Activated CD8-positive, alpha-beta T cell treated with anti-CD3 and anti-CD28 coated beads, Interleukin-2, amount 10 ng/mL, durations not matched to agents 7 days and 5 days (primary cell): ENCODE measurements at regions of chr19 and their contacts with region 1.

Region 1: DNA sequence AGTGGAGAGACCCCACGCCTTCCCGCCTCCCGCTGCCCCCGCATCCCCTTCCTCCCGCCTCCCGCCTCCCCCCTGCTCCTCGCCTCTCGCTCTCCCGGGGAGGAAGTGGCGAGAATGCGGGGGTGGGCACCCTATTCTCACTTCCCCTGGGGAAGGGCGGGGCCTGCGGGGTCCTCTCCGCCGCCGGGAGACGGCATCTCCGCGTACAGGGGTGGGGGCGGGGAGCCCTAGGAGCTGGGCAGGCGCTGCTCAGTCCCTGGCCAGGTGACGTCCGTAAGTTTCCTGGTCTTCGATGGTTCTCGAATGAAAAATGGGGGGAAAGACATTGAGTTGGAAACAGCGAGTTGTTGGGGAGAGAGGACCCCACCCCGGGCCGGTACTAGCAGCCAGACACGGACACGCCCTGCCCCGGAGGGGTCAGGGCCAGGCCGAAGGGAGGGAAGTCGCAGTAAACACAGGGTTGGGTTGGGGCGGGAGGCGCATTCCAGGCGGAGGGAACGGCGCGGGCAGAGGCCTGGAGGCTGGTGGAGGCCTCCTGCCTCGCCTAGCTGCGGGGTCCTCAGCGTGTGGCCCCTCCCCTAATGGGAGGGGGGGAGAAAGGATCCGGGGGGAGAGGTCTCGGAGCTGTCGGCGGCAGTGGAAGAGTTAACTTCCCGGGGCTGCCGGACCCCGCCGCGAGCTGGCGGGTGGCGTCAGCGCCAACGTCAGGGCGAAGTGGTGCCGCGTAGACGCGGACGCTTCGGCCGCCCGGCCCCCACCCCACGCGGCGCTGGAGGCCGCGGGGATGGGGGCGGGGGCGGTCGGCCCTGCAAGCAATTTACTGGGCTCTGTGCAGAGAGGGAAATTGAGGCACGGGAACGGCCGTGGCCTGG is 10.4 kb upstream of the JUND start:
- DNase-seq: peak; percentile 93
- ATAC-seq: peak; percentile 41
- H3K4me3 Mint-ChIP-seq: peak overlapping the region; percentile 89
- H3K27ac Mint-ChIP-seq: peak overlapping the region; percentile 93
- H3K4me1 Mint-ChIP-seq: peaks cover 72% of the 10 kb centered on the region
- H3K27me3 Mint-ChIP-seq: no peaks in the 10 kb centered on the region

Region 2: DNA sequence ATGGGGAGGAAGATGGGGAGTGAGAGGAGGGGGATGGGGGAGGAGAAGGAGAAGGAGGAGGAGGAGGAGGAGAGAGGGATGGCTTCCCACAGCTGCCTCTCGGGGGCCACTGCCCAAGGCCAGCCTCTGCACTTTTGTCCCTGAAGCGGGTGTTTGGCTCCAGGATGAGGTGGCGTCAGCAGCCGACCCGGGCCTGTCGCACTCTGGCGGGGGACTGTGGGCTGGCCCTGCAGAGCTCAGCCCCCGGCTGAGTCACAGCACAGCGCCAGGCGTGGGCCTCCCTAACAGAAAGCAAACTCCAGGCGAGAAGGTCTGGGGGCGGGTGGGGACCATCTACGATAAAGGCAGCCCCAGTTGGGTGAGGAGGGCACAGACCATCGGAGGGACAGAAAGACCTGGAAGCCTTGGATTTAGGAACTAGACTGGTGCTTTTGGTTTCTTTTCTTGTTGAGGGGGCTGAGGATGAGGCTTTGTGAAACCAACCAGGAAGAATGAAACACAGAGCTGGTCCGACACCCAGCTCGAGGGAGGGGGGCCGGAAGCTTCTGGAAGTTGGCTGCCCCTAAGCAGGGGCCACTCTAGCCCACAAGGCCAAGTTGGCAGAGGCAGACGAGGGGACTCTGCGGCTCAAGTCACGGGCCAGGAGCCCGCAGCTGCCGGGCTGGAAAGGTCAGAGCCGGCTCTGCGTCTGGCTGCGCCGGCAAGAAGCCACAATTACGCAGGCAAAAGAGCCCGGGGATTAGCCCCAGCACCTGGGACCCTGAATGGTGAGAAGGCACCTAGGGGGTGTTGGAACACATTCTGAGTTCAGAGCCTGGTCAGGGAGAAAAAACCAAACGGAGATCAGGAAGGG is 12.9 kb after region 1 on chr19:
- CTCF ChIA-PET with region 1: interaction called, 52 read pairs
- POLR2A ChIA-PET with region 1: interaction called, 157 read pairs
- DNase-seq: peak; percentile 87
- ATAC-seq: peak; percentile 74
- H3K4me3 Mint-ChIP-seq: peak overlapping the region; percentile 99
- H3K27ac Mint-ChIP-seq: peak overlapping the region; percentile 94
- H3K4me1 Mint-ChIP-seq: peaks cover 49% of the 10 kb centered on the region
- H3K27me3 Mint-ChIP-seq: no peaks in the 10 kb centered on the region

Region 3: GRCh38 chr19:18322759-18323460 is 31.1 kb after region 1 on chr19 and contains the start of gene LSM4:
- CTCF ChIA-PET with region 1: interaction called, 32 read pairs
- POLR2A ChIA-PET with region 1: interaction called, 64 read pairs
- DNase-seq: peak; percentile 100
- ATAC-seq: peak; percentile 95
- H3K4me3 Mint-ChIP-seq: peak within 1 kb of the TSS; percentile 92
- H3K27ac Mint-ChIP-seq: peak within 1 kb of the TSS; percentile 93
- H3K4me1 Mint-ChIP-seq: peaks cover 56% of the 10 kb centered on the region
- H3K27me3 Mint-ChIP-seq: no peaks in the 10 kb centered on the region
- total RNA-seq, gene LSM4: 199 to 215 TPM

Region 4: DNA sequence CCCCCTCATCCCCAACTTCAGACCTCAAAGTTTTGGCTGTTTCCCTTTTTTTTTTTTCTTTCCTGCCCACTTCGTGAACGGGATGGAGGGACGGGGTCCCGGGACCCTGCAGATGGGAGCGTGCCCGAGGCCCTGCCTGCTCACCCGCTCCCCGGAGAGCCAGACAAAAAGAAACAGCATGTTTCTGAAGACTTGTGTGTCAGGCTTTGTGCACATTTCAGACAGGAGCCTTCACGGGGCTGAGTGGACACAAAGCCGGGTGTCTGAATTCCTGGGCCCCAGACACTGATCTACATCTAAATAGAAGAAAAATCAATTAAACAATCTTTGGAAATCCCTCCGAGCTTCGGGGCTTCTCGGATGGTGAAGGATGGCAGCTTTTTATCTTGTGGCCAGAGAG is 52.7 kb after region 1 on chr19:
- CTCF ChIA-PET with region 1: no interaction called
- POLR2A ChIA-PET with region 1: no interaction called
- DNase-seq: no peak
- ATAC-seq: no peak
- H3K4me3 Mint-ChIP-seq: no peak overlapping the region
- H3K27ac Mint-ChIP-seq: no peak overlapping the region
- H3K4me1 Mint-ChIP-seq: peaks cover 25% of the 10 kb centered on the region
- H3K27me3 Mint-ChIP-seq: no peaks in the 10 kb centered on the region

Region 5: DNA sequence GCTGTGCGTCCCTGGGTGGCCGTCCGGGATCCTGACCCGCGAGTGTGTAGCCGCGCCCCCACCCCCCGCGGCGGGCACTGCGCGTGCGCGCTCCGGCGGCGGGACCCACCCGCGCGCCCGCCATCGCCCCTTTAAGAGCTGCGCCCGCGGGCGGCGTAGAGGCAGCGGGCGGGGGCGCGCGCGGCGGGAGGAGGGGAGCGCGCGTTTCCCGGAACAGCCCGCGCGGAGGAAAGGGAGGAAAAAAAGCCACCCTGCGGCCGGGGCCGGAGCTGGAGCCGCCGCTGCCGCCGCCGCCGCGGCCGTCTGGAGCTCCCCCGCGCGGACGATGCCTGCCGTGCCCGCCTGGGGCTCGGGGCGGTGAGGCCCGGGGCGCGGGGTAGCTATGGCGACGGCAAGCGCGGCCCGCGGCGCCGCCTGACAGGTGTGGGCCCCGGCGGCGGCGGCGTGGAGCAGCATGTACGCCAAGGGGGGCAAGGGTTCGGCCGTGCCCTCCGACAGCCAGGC is 127.4 kb after region 1 on chr19 and contains the start of gene SSBP4:
- CTCF ChIA-PET with region 1: interaction called, 3 read pairs
- POLR2A ChIA-PET with region 1: interaction called, 10 read pairs
- DNase-seq: peak; percentile 76
- ATAC-seq: peak; percentile 42
- H3K4me3 Mint-ChIP-seq: peak within 1 kb of the TSS; percentile 93
- H3K27ac Mint-ChIP-seq: peak within 1 kb of the TSS; percentile 94
- H3K4me1 Mint-ChIP-seq: peaks cover 83% of the 10 kb centered on the region
- H3K27me3 Mint-ChIP-seq: no peaks in the 10 kb centered on the region
- total RNA-seq, gene SSBP4: 198 to 204 TPM

Region 6: DNA sequence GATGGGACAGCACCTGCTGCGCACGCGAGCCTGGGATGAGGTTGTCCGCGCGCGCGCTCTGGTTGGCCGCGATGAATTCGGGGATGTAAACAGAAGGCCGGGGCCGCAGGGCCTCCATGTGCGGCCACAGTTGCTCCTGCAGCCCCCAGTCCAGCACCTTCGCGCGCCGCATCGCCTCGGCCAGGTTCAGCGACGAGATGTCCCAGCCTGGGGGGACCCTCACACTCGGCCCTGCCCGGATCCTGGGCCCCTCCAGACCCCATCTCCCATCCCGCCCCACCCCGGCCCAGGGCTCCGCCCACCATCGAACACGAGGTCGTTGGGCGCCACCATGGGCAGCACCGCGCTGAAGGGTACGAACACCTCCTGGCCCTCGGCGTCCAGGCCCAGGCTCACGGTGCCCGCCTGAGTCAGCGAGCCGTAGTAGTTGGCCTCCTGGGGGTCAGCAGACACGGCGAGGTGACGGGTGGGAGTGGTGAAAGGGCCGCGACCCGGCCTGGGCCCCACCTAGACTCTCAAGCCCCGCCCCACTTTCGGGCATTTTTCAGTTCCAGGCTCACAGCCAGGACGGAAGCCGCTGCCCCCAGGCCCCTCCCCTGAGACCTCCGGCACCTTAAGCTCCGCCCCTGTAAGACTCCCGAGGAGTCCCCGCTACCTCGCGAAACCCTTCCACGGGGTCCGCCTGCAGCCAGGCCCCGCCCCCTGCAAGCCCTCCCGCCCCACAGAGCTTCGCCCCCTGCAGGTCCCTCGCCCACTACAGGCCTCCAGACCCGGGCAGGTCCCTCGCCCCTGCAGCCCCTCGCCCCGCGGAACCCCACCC is 145.1 kb after region 1 on chr19:
- CTCF ChIA-PET with region 1: no interaction called
- POLR2A ChIA-PET with region 1: no interaction called
- DNase-seq: peak; percentile 91
- ATAC-seq: peak; percentile 74
- H3K4me3 Mint-ChIP-seq: peak overlapping the region; percentile 72
- H3K27ac Mint-ChIP-seq: peak overlapping the region; percentile 39
- H3K4me1 Mint-ChIP-seq: peaks cover 48% of the 10 kb centered on the region
- H3K27me3 Mint-ChIP-seq: no peaks in the 10 kb centered on the region